Thyroid gland (tissue), 4 donors: ENCODE measurements at regions of chr4 and their contacts with region 1.

Region 1: DNA sequence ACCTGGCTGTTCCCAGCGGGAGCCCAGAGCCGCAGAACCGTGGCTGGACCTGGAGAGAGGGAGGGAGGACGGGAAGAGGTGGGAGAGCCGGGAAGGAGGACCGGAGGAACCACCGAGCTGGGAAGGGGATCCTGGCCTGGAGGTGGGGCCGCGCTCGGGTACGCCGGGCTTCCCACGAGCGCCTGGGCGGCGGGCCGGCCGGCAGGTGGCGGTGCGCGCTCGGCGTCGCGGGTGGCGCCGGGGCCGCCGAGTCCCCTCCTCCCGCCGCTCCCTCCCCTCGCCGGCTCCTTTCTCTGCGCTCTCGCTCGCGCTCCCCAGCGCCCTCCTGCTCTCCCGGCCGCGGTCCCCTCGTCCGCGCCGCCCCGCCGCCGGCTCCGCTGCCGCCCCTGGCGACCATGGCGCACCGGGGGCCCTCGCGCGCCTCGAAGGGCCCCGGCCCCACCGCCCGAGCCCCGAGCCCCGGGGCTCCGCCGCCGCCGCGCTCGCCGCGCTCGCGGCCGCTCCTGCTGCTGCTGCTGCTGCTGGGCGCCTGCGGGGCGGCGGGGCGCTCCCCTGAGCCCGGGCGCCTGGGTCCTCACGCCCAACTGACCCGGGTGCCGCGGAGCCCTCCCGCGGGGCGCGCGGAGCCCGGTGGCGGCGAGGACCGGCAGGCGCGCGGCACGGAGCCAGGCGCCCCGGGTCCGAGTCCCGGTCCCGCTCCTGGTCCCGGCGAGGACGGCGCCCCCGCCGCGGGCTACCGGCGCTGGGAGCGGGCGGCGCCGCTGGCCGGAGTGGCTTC is at the start of gene SORCS2:
- DNase-seq: peak; percentile 71 to 72
- H3K4me3 ChIP-seq: peak within 1 kb of the TSS in 1 of 3 donors; percentile 37
- H3K27ac ChIP-seq: no peak within 1 kb of the TSS
- H3K4me1 ChIP-seq: peaks cover 20 to 38% of the 10 kb centered on the region in 2 donors
- H3K27me3 ChIP-seq: no peaks in the 10 kb centered on the region
- CTCF ChIP-seq: peak in 4 of 6 experiments; percentile 15 to 97 (median 91)
- POLR2A ChIP-seq: no peak
- total RNA-seq, gene SORCS2: 1.7 to 13.6 (median 3.6) TPM

Region 2: GRCh38 chr4:7295911-7296660 is 103.6 kb after region 1 on chr4:
- intact Hi-C with region 1: loop called (anchors 5 kb)
- DNase-seq: peak; percentile 36 to 41
- H3K4me3 ChIP-seq: no peak overlapping the region
- H3K27ac ChIP-seq: peak overlapping the region in 1 of 3 donors; percentile 36
- H3K4me1 ChIP-seq: peaks cover 13 to 16% of the 10 kb centered on the region in 2 donors
- H3K27me3 ChIP-seq: no peaks in the 10 kb centered on the region
- CTCF ChIP-seq: peak in 4 of 6 experiments; percentile 42 to 61 (median 54)
- POLR2A ChIP-seq: no peak

Region 3: GRCh38 chr4:7335344-7336069 is 143.1 kb after region 1 on chr4:
- intact Hi-C with region 1: loop called (anchors 5 kb)
- DNase-seq: peak; percentile 75 to 91
- H3K4me3 ChIP-seq: no peak overlapping the region
- H3K27ac ChIP-seq: peak overlapping the region in 1 of 3 donors; percentile 12
- H3K4me1 ChIP-seq: peaks cover 10% of the 10 kb centered on the region in 2 donors
- H3K27me3 ChIP-seq: no peaks in the 10 kb centered on the region
- CTCF ChIP-seq: peak; percentile 46 to 76 (median 63)
- POLR2A ChIP-seq: no peak

Region 4: GRCh38 chr4:7719354-7720174 is 527.1 kb after region 1 on chr4:
- intact Hi-C with region 1: loop called (anchors 5 kb)
- DNase-seq: peak; percentile 54 to 59
- H3K4me3 ChIP-seq: no peak overlapping the region
- H3K27ac ChIP-seq: no peak overlapping the region
- H3K4me1 ChIP-seq: no peaks in the 10 kb centered on the region
- H3K27me3 ChIP-seq: no peaks in the 10 kb centered on the region
- CTCF ChIP-seq: peak; percentile 41 to 84 (median 66)
- POLR2A ChIP-seq: no peak

Region 5: GRCh38 chr4:7802093-7802726 is 609.8 kb after region 1 on chr4:
- intact Hi-C with region 1: loop called (anchors 5 kb)
- DNase-seq: peak; percentile 82 to 86
- H3K4me3 ChIP-seq: no peak overlapping the region
- H3K27ac ChIP-seq: peak overlapping the region in 2 of 3 donors; percentile 72 to 99
- H3K4me1 ChIP-seq: peaks cover 48% of the 10 kb centered on the region in 2 donors
- H3K27me3 ChIP-seq: no peaks in the 10 kb centered on the region
- CTCF ChIP-seq: peak; percentile 75 to 97 (median 91)
- POLR2A ChIP-seq: no peak